ENCODE measurements at regions of chr5 and their contacts with region 1.

Region 1: GRCh38 chr5:60843936-60844905 is at the start of gene ELOVL7:
- DNase-seq: peak; percentile 76
- H3K4me3 Mint-ChIP-seq: peak within 1 kb of the TSS; percentile 88
- H3K27ac Mint-ChIP-seq: peak within 1 kb of the TSS; percentile 75
- H3K4me1 Mint-ChIP-seq: peaks cover 18% of the 10 kb centered on the region
- H3K27me3 Mint-ChIP-seq: no peaks in the 10 kb centered on the region
- CTCF ChIP-seq: no peak
- total RNA-seq, gene ELOVL7: 10.3 and 14.3 TPM in 2 replicates

Region 2: GRCh38 chr5:60805470-60805869 is 38.8 kb before region 1 on chr5:
- CTCF ChIA-PET with region 1: no interaction called
- POLR2A ChIA-PET with region 1: no interaction called
- intact Hi-C with region 1: loop called (anchors 1 kb)
- DNase-seq: peak; percentile 34
- H3K4me3 Mint-ChIP-seq: no peak overlapping the region
- H3K27ac Mint-ChIP-seq: peak overlapping the region; percentile 14
- H3K4me1 Mint-ChIP-seq: peaks cover 21% of the 10 kb centered on the region
- H3K27me3 Mint-ChIP-seq: no peaks in the 10 kb centered on the region
- CTCF ChIP-seq: no peak

Region 3: DNA sequence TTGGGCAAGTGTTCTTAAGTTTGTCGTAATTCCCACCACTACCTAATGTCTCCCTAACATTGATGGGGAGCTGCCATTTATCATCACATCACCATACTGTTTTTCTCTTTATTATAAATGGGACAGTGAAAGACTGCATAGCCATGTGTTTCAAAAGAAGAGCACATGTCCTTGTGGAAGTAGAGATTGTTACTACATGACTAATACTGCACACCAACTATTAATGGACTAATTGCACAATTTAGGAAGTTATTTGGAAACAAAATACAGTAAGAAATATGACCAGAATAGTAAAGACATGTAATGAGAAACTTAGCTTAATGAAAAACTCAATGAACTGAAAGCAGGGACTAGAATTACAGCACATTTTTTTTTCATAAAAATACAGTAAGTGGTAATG is 11.8 kb after region 1 on chr5:
- CTCF ChIA-PET with region 1: interaction called, 4 read pairs
- POLR2A ChIA-PET with region 1: interaction called, 11 read pairs
- intact Hi-C with region 1: no loop called
- DNase-seq: peak; percentile 60
- H3K4me3 Mint-ChIP-seq: no peak overlapping the region
- H3K27ac Mint-ChIP-seq: peak overlapping the region; percentile 25
- H3K4me1 Mint-ChIP-seq: peaks cover 7% of the 10 kb centered on the region
- H3K27me3 Mint-ChIP-seq: no peaks in the 10 kb centered on the region
- CTCF ChIP-seq: no peak

Measured in MCF 10A (cell line).